Tibial artery (tissue), 4 donors: ENCODE measurements at regions of chr3 and their contacts with region 1.

Region 1: GRCh38 chr3:97070298-97070697 is 255.9 kb downstream of the EPHA6 start:
- DNase-seq: no peak
- H3K4me3 ChIP-seq: no peak overlapping the region
- H3K27ac ChIP-seq: no peak overlapping the region
- H3K4me1 ChIP-seq: peaks cover 0 to 8% (median 0%) of the 10 kb centered on the region in 4 donors
- H3K27me3 ChIP-seq: no peaks in the 10 kb centered on the region
- CTCF ChIP-seq: no peak

Region 2: DNA sequence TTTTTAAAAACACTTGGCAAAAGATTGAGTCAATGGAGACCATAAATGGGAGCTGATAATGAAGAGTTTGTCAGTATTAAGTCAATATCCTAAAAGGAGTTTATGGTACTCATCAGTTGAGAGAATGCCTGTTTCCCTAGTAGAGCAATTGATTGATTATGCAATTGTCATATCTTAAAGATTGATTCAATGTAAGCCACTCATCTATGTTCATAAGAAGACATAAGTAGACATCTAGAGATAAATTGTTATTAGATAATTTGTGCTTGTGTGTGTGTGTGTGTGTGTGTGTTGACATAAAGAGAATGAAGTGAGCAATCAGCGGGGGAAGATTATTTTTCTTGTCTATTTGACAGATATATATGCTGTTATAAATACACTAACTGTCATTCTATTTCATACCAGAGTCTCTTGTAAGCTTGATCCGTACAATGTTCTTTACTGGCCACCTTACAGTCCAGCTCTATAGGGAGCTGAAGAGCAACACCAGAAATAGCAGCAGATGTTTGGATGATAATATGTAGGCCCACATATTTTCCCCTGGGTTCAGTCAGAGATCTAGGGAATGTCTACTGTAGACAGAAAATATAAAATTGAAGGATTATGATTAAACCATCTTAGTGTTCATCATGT is 1104.5 kb before region 1 on chr3:
- intact Hi-C with region 1: loop called (anchors 10 kb)
- DNase-seq: no peak
- H3K4me3 ChIP-seq: no peak overlapping the region
- H3K27ac ChIP-seq: no peak overlapping the region
- H3K4me1 ChIP-seq: no peaks in the 10 kb centered on the region
- H3K27me3 ChIP-seq: no peaks in the 10 kb centered on the region
- CTCF ChIP-seq: no peak